Psoas muscle (tissue), 8 donors: ENCODE measurements at regions of chr15 and their contacts with region 1.

Region 1: GRCh38 chr15:66700802-66701421 is 1.1 kb upstream of the SMAD6 start:
- DNase-seq: peak; percentile 97 to 98
- ATAC-seq: peak; percentile 88 to 91 (median 90)
- H3K4me3 ChIP-seq: peak overlapping the region; percentile 85
- H3K27ac ChIP-seq: peak overlapping the region; percentile 79
- H3K4me1 ChIP-seq: peaks cover 5% of the 10 kb centered on the region
- H3K27me3 ChIP-seq: no peaks in the 10 kb centered on the region
- CTCF ChIP-seq: no peak

Region 2: DNA sequence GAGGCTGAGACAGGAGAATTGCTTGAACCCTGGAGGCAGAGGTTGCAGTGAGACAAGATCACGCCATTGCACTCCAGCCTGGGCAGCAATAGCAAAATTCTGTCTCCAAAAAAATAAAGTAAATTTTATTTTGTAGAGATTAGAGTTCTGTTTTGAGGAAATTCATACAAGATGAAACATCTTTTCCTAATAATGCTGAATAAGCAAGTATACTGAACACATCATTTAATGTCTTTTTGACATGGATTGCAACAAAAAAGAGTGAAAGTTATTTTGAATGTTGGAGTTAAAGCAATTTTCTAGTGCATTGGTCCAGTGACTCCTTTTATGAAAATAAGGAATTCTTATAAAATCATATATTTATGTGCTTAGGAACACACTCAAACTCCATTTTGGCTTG is 155.7 kb before region 1 on chr15:
- intact Hi-C with region 1: no loop called
- DNase-seq: no peak
- ATAC-seq: no peak
- H3K4me3 ChIP-seq: no peak overlapping the region
- H3K27ac ChIP-seq: no peak overlapping the region
- H3K4me1 ChIP-seq: no peaks in the 10 kb centered on the region
- H3K27me3 ChIP-seq: no peaks in the 10 kb centered on the region
- CTCF ChIP-seq: no peak

Region 3: GRCh38 chr15:66603301-66604179 is 97.4 kb before region 1 on chr15:
- intact Hi-C with region 1: loop called in 1 of 2 experiments (anchors 5 kb)
- DNase-seq: peak; percentile 50 to 71
- ATAC-seq: peak in 3 of 4 donors; percentile 58 to 69 (median 69)
- H3K4me3 ChIP-seq: no peak overlapping the region
- H3K27ac ChIP-seq: no peak overlapping the region
- H3K4me1 ChIP-seq: no peaks in the 10 kb centered on the region
- H3K27me3 ChIP-seq: no peaks in the 10 kb centered on the region
- CTCF ChIP-seq: peak; percentile 53

Region 4: DNA sequence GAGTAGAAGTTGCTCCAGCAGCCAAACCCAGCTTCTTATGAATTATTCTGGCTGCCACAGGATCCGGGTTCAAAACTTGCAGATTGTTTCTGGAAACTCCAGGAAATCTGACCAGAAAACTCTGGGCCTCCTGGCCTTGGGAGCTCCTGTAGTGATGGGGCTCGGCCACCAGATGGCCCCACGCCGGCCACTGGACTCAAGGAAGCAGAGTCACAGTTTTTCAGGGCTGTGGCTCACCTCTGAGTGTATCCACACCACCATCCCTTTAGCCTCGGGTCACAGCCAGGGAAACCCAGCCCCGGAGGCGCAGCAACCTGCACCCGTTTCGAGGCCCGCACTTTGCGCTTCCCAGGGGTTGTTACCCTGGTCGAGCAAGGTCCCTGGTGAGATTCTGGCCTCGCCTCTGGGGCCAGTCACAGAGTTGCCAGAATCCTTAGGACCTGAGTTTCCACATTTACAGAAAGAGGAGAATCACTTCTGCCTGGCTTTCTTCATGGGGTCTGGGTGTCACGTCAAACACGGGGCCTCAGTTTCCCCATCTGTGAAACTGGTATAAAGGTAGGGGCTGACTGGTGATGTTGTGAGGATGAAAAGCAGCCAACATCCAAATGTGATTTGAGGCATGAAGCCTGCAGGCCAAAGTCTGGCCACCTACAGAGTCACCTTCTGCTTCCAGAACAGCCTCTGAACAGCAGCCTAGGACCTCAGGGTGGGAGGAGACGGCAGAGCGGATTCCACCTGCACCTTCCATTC is 81.6 kb before region 1 on chr15:
- intact Hi-C with region 1: loop called in 1 of 2 experiments (anchors 5 kb)
- DNase-seq: peak; percentile 76 to 85
- ATAC-seq: peak; percentile 82 to 91 (median 88)
- H3K4me3 ChIP-seq: no peak overlapping the region
- H3K27ac ChIP-seq: no peak overlapping the region
- H3K4me1 ChIP-seq: peaks cover 7% of the 10 kb centered on the region
- H3K27me3 ChIP-seq: peaks cover 0 to 20% (median 6%) of the 10 kb centered on the region in 3 donors
- CTCF ChIP-seq: peak; percentile 88

Region 5: DNA sequence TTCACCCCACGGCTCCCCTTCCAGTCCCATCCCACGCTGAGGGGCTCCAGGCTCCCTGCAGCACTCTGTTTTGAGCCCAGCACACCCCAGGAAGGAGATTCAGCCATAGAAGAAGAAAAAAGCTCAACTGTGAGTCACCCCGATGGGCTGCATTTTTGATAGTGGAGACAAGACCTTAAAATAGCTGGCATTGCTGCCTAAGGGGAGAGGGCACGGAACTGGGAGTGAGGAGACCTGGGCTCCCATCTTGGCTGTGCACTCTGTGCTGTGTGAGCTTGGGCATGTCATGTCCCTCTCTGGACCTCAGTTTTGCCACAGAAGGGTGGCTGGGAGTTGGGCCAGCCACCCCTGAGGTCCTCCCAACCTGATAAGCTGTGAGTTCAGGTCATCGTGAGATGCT is 56.0 kb before region 1 on chr15:
- intact Hi-C with region 1: no loop called
- DNase-seq: no peak
- ATAC-seq: no peak
- H3K4me3 ChIP-seq: no peak overlapping the region
- H3K27ac ChIP-seq: peak overlapping the region; percentile 16
- H3K4me1 ChIP-seq: no peaks in the 10 kb centered on the region
- H3K27me3 ChIP-seq: no peaks in the 10 kb centered on the region
- CTCF ChIP-seq: no peak

Region 6: DNA sequence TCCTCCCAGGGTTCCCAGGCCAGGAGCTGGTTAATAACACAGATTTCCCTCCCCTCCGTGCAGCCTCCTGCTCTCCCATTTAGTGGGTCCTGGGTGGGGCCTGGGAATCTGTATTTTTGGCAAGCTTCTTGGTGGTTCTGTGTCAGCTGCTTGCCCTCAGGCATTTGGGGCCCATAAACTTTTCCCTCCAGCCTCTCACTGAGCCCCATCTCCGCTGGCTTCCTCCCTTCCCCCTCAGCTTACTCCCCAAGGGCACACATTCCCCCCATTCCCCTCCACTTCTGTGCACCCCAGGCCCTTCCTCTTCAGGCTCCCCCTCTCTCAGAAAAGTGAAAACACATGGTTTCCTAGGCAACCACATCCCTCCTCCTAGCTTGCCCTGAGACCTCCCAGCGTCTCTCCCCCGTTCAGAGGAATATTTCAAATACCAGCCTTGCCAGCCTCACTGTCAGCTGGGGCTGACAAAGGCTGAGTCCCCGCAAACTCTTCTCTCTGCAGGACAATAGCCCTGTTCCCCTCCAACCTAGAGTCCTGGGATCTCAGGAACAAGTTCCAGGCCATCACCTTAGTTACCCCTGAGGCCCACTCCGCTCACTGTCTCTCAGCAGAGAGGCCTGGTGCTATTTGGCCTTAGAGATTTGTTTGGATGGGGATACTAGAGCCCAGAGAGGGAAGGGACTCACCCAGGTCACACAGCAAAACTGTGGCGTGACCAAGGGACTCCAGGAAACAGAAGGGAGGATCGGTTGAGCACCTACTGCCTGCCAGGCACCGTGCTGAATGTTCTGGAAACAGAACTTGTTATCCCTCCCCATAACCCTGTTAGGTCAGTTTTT is 43.5 kb before region 1 on chr15:
- intact Hi-C with region 1: no loop called
- DNase-seq: no peak
- ATAC-seq: no peak
- H3K4me3 ChIP-seq: no peak overlapping the region
- H3K27ac ChIP-seq: no peak overlapping the region
- H3K4me1 ChIP-seq: no peaks in the 10 kb centered on the region
- H3K27me3 ChIP-seq: peaks cover 0 to 13% (median 6%) of the 10 kb centered on the region in 3 donors
- CTCF ChIP-seq: no peak

Region 7: GRCh38 chr15:66724850-66725824 is 24.2 kb after region 1 on chr15:
- intact Hi-C with region 1: loop called in 1 of 2 experiments (anchors 2 kb)
- DNase-seq: no peak
- ATAC-seq: no peak
- H3K4me3 ChIP-seq: no peak overlapping the region
- H3K27ac ChIP-seq: no peak overlapping the region
- H3K4me1 ChIP-seq: no peaks in the 10 kb centered on the region
- H3K27me3 ChIP-seq: no peaks in the 10 kb centered on the region
- CTCF ChIP-seq: no peak

Region 8: GRCh38 chr15:66774001-66774814 is 73.3 kb after region 1 on chr15:
- intact Hi-C with region 1: loop called in 1 of 2 experiments (anchors 1 kb)
- DNase-seq: peak; percentile 84 to 91
- ATAC-seq: peak; percentile 96 to 99 (median 97)
- H3K4me3 ChIP-seq: no peak overlapping the region
- H3K27ac ChIP-seq: peak overlapping the region; percentile 30
- H3K4me1 ChIP-seq: peaks cover 16% of the 10 kb centered on the region
- H3K27me3 ChIP-seq: no peaks in the 10 kb centered on the region
- CTCF ChIP-seq: peak; percentile 97

Region 9: DNA sequence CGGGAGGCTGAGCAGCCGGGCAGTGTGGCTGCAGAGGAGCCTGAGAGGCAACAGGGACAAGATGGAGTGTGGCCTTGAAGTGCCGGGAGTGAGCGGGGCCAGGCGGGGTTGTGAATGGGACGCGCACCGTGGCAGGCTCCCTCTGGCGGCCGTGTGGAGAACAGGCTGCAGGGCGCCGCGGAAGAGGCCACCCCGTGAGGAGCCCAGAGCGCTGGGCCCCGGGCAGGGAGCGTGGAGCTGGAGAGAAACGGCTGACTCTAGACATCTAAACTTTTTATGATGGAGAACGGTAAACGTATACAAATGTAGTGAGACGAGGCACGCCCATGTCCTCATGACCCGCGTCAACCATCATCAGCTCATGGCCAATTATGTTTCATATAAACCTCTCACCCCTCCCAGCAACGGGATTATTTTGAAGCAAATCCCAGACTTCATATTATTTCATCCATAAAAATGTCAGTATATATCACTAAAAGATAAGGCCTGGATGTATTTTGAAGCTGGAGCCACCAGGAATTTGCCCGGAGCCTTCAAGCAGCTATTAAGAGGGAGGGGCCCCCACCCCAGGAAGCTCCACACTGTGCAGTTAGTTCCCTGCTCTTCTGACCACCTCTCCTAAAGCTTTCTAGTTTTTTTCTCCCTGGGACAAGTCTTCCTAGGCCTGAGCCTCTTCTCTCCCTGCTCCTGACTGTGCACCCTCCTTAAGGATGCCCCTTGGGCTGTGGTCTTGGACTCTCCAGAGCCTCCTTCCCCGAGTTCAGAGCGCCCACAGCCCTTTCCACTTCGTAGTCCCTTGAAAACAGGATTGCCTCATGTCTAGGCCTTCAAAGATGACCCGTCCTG is 150.5 kb after region 1 on chr15:
- intact Hi-C with region 1: loop called in 1 of 2 experiments (anchors 5 kb)
- DNase-seq: peak; percentile 89 to 91
- ATAC-seq: peak; percentile 92 to 98 (median 94)
- H3K4me3 ChIP-seq: peak overlapping the region; percentile 18
- H3K27ac ChIP-seq: no peak overlapping the region
- H3K4me1 ChIP-seq: peaks cover 8% of the 10 kb centered on the region
- H3K27me3 ChIP-seq: peaks cover 0 to 3% (median 0%) of the 10 kb centered on the region in 3 donors
- CTCF ChIP-seq: peak; percentile 96

Region 10: DNA sequence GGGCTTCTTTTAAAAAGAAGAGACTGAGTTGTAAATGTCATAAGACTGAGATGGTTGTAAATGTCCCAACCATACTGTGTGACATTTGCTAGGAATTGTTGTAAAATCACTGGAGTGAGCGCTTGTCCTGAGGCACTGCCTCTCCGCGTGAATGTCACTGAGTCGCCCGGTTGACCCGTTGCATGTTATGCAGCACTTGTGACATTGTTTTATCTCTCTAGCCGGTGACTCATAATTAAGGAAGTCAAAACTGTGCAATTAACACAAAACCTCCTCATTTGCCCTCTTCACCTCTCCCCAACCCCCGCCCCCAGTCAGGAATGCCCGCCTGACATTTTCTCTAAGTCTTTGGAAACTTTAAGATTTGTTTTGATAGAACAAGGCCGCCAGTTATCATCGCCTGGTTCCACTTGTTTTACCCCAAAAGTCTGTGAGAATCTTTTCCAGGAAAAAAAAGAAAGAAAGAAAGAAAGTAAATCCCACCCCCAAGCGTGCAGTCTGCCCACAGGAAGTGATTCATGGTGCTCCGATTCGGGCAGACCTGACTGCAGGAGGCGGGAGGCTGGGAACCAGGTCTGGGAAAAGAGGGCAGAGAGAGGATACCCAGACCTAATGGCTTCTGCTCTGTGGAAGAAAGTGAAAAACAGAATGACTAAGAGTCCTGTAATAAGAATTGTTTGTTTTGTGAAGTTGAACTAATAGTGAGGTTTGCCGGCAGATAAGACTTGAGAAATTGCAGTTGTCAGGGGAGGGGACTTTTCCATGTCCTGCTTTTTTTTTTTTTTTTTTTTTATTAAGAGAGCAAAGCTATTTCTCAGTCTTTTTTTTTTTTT is 449.3 kb after region 1 on chr15:
- intact Hi-C with region 1: no loop called
- DNase-seq: peak; percentile 75 to 77
- ATAC-seq: peak; percentile 37 to 63 (median 54)
- H3K4me3 ChIP-seq: no peak overlapping the region
- H3K27ac ChIP-seq: peak overlapping the region; percentile 87
- H3K4me1 ChIP-seq: peaks cover 91% of the 10 kb centered on the region
- H3K27me3 ChIP-seq: no peaks in the 10 kb centered on the region
- CTCF ChIP-seq: no peak